Upper lobe of right lung (tissue), 1 donor: ENCODE measurements at regions of chr3 and their contacts with region 1.

Region 1: DNA sequence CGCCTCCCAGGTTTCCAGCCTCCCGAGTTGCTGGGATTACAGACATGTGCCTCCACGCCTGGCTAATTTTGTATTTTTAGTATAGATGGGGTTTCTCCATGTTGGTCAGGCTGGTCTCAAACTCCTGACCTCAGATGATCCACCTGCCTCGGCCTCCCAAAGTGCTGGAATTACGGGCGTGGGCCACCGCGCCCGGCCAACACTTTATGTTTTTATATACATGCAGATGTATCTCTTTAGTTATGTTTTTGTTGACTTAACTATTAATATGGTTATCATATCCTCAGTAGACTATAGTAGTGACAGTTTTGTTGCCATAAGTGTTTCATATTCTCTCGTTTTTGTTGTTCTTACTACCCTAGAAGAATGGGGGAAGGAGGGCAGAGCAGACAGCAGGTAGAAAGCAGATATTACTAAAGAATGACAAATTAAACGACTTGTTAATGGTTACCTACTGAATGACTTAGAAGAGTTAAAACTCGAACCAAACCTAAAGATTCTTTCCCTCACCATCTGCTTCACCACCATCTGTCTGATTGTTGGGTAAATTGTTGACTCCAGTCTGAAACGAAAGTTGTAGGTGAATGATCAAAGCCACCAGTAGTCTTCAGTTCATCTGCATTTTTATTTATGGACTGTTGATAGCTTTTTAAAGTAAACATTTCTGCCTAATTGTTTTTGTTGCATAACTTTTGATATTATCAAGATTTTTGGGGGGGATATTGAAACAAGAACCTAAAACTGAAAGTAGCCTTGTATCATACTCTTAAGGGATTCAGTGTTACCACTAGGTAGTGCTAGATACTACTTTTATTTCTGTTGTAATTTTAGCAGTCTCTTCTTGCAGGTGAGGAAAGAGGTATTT is 89.3 kb downstream of the RASA2 start:
- DNase-seq: no peak
- ATAC-seq: peak; percentile 49
- H3K4me3 ChIP-seq: no peak overlapping the region
- H3K27ac ChIP-seq: no peak overlapping the region
- H3K4me1 ChIP-seq: no peaks in the 10 kb centered on the region
- H3K27me3 ChIP-seq: no peaks in the 10 kb centered on the region
- CTCF ChIP-seq: peak; percentile 59

Region 2: DNA sequence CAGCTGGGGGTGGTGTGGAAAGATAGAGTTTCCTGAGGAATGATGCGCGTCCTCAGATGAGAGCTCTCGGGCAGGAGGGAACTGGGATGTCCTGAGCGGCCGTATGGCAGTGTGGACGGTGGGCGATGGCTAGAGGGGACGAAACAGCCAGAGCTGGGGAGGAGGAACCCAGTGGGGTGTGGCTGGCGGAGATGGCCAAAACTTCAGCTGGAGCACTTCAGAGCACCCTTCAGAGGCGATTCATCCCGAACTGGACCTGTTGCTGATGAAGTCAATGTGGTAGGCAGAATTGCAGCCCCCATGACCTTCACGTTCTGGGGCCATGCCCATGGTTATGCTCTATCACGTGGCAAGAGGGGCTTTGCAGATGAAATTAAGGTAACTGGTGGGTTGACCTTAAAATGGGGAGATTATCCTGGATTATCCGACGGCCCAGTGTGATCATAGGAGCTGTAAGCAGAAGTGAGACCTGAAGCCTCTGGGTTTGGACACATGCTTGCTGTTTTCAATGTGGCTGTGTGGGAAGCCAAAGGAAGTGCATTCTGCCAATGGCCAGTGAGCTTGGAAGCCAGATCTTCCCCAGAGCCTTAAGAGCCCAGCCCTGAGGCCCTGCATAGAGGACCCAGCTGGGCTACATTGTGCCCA is 352.6 kb after region 1 on chr3:
- intact Hi-C with region 1: loop called (anchors 10 kb)
- DNase-seq: no peak
- ATAC-seq: peak; percentile 25
- H3K4me3 ChIP-seq: no peak overlapping the region
- H3K27ac ChIP-seq: no peak overlapping the region
- H3K4me1 ChIP-seq: no peaks in the 10 kb centered on the region
- H3K27me3 ChIP-seq: no peaks in the 10 kb centered on the region
- CTCF ChIP-seq: no peak

Region 3: DNA sequence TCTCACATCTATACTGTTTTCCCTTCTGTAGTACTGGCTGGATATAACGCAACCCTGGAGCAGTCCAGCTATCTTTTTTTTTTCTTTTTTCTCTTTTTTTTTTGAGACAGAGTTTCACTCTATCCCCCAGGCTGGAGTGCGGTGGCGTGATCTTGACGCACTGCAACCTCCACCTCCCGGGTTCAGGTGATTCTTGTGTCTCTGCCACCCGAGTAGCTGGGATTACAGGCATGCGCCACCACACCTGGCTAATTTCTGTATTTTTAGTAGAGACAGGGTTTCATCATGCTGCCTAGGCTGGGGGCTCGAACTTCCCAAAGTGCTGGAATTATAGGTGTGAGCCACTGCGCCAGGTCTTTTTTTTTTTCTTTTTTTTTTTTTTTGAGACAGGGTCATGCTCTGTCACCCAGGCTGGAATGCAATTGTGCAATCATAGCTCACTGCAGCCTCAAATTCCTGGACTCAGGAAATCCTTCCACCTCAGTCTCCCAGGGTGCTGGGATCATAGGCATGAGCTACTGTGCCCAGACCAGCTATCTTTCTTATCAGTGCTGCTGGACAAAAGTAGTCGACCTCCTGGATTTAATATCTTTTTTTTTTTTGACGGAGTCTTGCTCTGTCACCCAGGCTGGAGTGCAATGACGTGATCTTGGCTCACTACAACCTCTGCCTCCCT is 512.3 kb after region 1 on chr3:
- intact Hi-C with region 1: no loop called
- DNase-seq: no peak
- ATAC-seq: no peak
- H3K4me3 ChIP-seq: no peak overlapping the region
- H3K27ac ChIP-seq: no peak overlapping the region
- H3K4me1 ChIP-seq: no peaks in the 10 kb centered on the region
- H3K27me3 ChIP-seq: no peaks in the 10 kb centered on the region
- CTCF ChIP-seq: no peak